CD8-positive, alpha-beta memory T cell (primary cell): ENCODE measurements at regions of chr5 and their contacts with region 1.

Region 1: GRCh38 chr5:157253547-157253946 is 12.4 kb upstream of the CYFIP2 start:
- DNase-seq: no peak
- H3K4me3 ChIP-seq: peak overlapping the region; percentile 8
- H3K4me3 Mint-ChIP-seq: peak overlapping the region in 6 of 7 donors; percentile 63 to 82 (median 74)
- H3K27ac ChIP-seq: peak overlapping the region; percentile 48
- H3K27ac Mint-ChIP-seq: peak overlapping the region; percentile 84 to 99 (median 92)
- H3K4me1 ChIP-seq: peaks cover 98% of the 10 kb centered on the region
- H3K4me1 Mint-ChIP-seq: peaks cover 93 to 99% (median 96%) of the 10 kb centered on the region in 3 donors
- H3K27me3 ChIP-seq: no peaks in the 10 kb centered on the region
- H3K27me3 Mint-ChIP-seq: peaks cover 0 to 5% of the 10 kb centered on the region in 2 donors

Region 2: DNA sequence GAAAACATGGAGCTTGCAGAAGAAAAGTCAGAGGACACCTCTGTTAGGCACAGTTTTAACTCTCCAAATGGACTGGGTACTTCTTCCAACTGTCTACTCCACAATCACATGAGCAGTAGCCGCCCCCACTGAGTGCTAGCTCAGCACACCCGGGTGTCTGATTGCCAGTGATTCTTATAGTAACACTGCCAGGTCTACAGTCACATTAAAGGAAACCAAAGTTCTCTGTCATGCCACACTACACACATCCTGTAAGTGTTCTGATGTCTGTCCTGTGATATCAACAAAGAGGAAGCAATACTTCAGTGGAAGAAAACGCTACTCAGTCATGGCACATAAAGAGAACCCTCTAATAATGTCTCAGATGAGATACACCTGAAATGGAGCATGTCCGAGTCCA is 144.6 kb before region 1 on chr5 and contains the start of gene HAVCR2:
- CTCF ChIA-PET with region 1: no interaction called
- POLR2A ChIA-PET with region 1: no interaction called
- DNase-seq: peak; percentile 6 to 58 (median 53)
- H3K4me3 ChIP-seq: peak within 1 kb of the TSS; percentile 62
- H3K4me3 Mint-ChIP-seq: peak within 1 kb of the TSS; percentile 53 to 83 (median 80)
- H3K27ac ChIP-seq: peak within 1 kb of the TSS; percentile 34
- H3K27ac Mint-ChIP-seq: peak within 1 kb of the TSS; percentile 59 to 96 (median 92)
- H3K4me1 ChIP-seq: peaks cover 23% of the 10 kb centered on the region
- H3K4me1 Mint-ChIP-seq: peaks cover 29 to 40% (median 36%) of the 10 kb centered on the region in 3 donors
- H3K27me3 ChIP-seq: no peaks in the 10 kb centered on the region
- H3K27me3 Mint-ChIP-seq: no peaks in the 10 kb centered on the region
- total RNA-seq, gene HAVCR2: 6.3 to 6.6 TPM

Region 3: GRCh38 chr5:157204765-157205164 is 48.8 kb before region 1 on chr5:
- CTCF ChIA-PET with region 1: interaction called, 10 read pairs
- POLR2A ChIA-PET with region 1: no interaction called
- DNase-seq: peak in 1 of 5 donors; percentile 76
- H3K4me3 ChIP-seq: peak overlapping the region; percentile 2
- H3K4me3 Mint-ChIP-seq: peak overlapping the region; percentile 48 to 72 (median 69)
- H3K27ac ChIP-seq: peak overlapping the region; percentile 45
- H3K27ac Mint-ChIP-seq: peak overlapping the region; percentile 78 to 96 (median 87)
- H3K4me1 ChIP-seq: peaks cover 95% of the 10 kb centered on the region
- H3K4me1 Mint-ChIP-seq: peaks cover 71 to 95% (median 94%) of the 10 kb centered on the region in 3 donors
- H3K27me3 ChIP-seq: no peaks in the 10 kb centered on the region
- H3K27me3 Mint-ChIP-seq: peaks cover 0 to 3% of the 10 kb centered on the region in 2 donors

Region 4: GRCh38 chr5:157241483-157241882 is 12.1 kb before region 1 on chr5:
- CTCF ChIA-PET with region 1: interaction called, 10 read pairs
- POLR2A ChIA-PET with region 1: no interaction called
- DNase-seq: no peak
- H3K4me3 ChIP-seq: no peak overlapping the region
- H3K4me3 Mint-ChIP-seq: no peak overlapping the region
- H3K27ac ChIP-seq: no peak overlapping the region
- H3K27ac Mint-ChIP-seq: peak overlapping the region in 3 of 8 donors; percentile 3 to 73 (median 17)
- H3K4me1 ChIP-seq: peaks cover 26% of the 10 kb centered on the region
- H3K4me1 Mint-ChIP-seq: peaks cover 23 to 70% (median 51%) of the 10 kb centered on the region in 3 donors
- H3K27me3 ChIP-seq: no peaks in the 10 kb centered on the region
- H3K27me3 Mint-ChIP-seq: no peaks in the 10 kb centered on the region

Region 5: DNA sequence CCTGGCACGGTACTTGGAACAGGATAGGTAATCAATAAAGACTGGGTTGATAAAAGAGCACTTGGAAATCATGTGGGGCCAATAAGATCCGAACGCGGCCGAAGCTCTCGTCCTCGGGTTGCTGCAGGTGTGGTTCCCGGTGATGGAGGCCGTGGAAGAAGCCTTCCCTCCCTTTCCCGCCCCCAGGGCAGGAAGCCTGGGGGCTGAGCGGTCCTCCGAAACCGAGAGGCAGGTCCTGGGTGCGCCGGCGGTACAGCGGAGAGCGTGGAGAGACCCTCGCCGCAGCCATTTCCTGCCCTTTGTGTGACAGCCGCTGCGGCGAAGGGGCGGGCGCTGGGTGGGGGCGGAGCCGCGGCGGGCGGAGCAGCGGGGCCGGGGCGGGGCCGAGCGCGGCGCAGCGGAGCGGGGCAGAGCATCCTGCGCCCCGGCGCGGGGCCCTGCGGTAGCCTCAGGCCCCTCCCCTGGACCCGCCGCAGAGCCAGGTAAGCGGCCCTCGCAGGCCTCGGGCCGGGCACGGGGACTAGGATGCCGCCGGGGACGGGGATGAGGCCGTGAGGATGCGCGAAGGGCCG is 12.3 kb after region 1 on chr5 and contains the start of gene CYFIP2:
- CTCF ChIA-PET with region 1: interaction called, 62 read pairs
- POLR2A ChIA-PET with region 1: interaction called, 28 read pairs
- DNase-seq: peak; percentile 82 to 92 (median 86)
- H3K4me3 ChIP-seq: peak within 1 kb of the TSS; percentile 75
- H3K4me3 Mint-ChIP-seq: peak within 1 kb of the TSS; percentile 97 to 99 (median 97)
- H3K27ac ChIP-seq: peak within 1 kb of the TSS; percentile 68
- H3K27ac Mint-ChIP-seq: peak within 1 kb of the TSS; percentile 92 to 99 (median 98)
- H3K4me1 ChIP-seq: peaks cover 66% of the 10 kb centered on the region
- H3K4me1 Mint-ChIP-seq: peaks cover 67 to 80% (median 79%) of the 10 kb centered on the region in 3 donors
- H3K27me3 ChIP-seq: no peaks in the 10 kb centered on the region
- H3K27me3 Mint-ChIP-seq: peaks cover 0 to 2% of the 10 kb centered on the region in 2 donors
- total RNA-seq, gene CYFIP2: 239 to 259 TPM

Region 6: DNA sequence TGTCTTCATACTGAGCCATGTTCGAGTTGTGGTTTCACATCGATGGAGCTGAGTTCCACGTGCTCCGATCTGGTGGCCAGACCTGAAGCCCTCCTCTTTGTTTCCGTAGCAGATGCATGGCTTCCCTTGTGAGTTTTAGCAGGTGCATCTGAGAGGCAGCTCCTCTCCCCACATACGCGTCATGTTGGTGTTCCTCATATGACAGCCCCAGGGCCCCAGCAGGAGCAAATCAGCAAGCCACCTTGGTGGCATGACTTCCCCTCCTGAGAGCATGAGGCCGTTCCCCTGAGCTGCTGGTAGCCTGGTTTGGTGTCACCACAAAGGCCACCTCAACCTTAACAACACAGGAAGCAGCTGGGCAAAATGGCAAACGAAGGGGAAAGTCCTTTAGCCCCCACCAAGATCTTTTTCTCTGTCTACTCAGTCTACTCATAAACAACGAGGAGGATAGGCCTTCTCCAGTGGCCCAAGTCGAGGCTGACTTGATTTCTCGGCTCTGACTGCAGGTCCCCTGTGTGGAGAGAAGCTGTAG is 18.3 kb after region 1 on chr5:
- CTCF ChIA-PET with region 1: interaction called, 62 read pairs
- POLR2A ChIA-PET with region 1: interaction called, 28 read pairs
- DNase-seq: peak; percentile 71 to 95 (median 94)
- H3K4me3 ChIP-seq: peak overlapping the region; percentile 33
- H3K4me3 Mint-ChIP-seq: peak overlapping the region; percentile 74 to 89 (median 79)
- H3K27ac ChIP-seq: peak overlapping the region; percentile 57
- H3K27ac Mint-ChIP-seq: peak overlapping the region; percentile 96 to 99 (median 98)
- H3K4me1 ChIP-seq: peaks cover 94% of the 10 kb centered on the region
- H3K4me1 Mint-ChIP-seq: peaks cover 92 to 98% (median 95%) of the 10 kb centered on the region in 3 donors
- H3K27me3 ChIP-seq: no peaks in the 10 kb centered on the region
- H3K27me3 Mint-ChIP-seq: no peaks in the 10 kb centered on the region

Region 7: DNA sequence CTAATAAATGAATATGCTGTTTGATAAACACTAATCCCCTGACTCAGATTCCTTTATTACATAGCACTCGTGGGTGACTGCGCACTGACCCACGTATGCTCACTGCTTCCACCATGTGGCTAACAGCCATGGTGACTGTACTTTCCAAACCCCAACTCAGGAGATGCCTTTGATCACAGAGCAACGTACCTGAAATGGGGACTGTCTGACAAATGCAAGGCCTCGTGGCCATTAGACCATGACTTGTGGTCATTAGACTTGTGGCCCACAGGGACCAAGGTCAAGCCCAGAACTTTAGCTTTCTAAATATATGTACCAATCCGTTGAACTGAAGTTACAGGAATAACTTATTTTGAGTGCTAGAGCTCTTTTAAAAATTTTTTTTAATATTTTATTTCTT is 58.9 kb after region 1 on chr5:
- CTCF ChIA-PET with region 1: interaction called, 15 read pairs
- POLR2A ChIA-PET with region 1: no interaction called
- DNase-seq: peak; percentile 24 to 73 (median 50)
- H3K4me3 ChIP-seq: no peak overlapping the region
- H3K4me3 Mint-ChIP-seq: no peak overlapping the region
- H3K27ac ChIP-seq: no peak overlapping the region
- H3K27ac Mint-ChIP-seq: peak overlapping the region; percentile 17 to 87 (median 82)
- H3K4me1 ChIP-seq: peaks cover 40% of the 10 kb centered on the region
- H3K4me1 Mint-ChIP-seq: peaks cover 29 to 46% (median 41%) of the 10 kb centered on the region in 3 donors
- H3K27me3 ChIP-seq: no peaks in the 10 kb centered on the region
- H3K27me3 Mint-ChIP-seq: no peaks in the 10 kb centered on the region

Region 8: GRCh38 chr5:157328277-157328912 is 74.8 kb after region 1 on chr5:
- CTCF ChIA-PET with region 1: interaction called, 17 read pairs
- POLR2A ChIA-PET with region 1: interaction called, 5 read pairs
- DNase-seq: peak; percentile 31 to 68 (median 59)
- H3K4me3 ChIP-seq: peak overlapping the region; percentile 7
- H3K4me3 Mint-ChIP-seq: peak overlapping the region in 2 of 7 donors; percentile 11 to 35
- H3K27ac ChIP-seq: no peak overlapping the region
- H3K27ac Mint-ChIP-seq: peak overlapping the region; percentile 2 to 91 (median 79)
- H3K4me1 ChIP-seq: peaks cover 30% of the 10 kb centered on the region
- H3K4me1 Mint-ChIP-seq: peaks cover 12 to 31% (median 27%) of the 10 kb centered on the region in 3 donors
- H3K27me3 ChIP-seq: no peaks in the 10 kb centered on the region
- H3K27me3 Mint-ChIP-seq: no peaks in the 10 kb centered on the region

Region 9: DNA sequence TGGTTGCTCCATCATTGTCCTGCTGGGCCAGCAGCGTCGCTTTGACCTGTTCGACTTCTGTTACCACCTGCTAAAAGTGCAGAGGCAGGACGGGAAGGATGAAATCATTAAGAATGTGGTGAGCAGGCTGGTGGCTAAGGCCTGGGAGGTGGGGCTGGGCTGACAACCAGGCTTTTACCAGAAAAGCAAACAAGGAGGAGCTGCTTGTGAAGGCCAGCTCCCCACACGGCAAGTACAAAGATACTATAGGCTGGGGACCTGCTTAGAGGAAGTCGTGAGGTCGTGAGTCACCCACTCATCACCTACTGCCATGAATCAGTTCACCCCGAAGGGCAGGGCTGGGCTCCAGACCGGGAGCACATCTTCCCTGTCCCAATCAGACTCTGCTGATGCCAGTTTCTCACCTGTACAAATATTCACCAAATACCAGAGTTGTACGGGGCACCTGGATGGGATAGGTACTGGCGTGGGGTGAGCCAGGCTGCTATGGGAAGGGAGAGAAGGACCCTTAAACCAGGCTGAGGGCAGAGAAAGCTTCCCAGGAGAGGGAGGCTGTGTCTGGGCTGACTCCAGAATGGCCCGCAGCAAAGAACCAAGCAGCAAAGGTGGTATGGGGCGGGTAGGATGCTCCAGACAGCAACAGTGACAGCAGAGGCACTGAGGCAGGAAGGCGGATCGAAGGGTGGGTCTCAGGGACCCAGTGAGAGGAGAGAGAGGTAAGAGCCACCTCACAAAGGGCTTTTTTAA is 137.2 kb after region 1 on chr5:
- CTCF ChIA-PET with region 1: no interaction called
- POLR2A ChIA-PET with region 1: no interaction called
- DNase-seq: peak in 4 of 5 donors; percentile 39 to 76 (median 56)
- H3K4me3 ChIP-seq: no peak overlapping the region
- H3K4me3 Mint-ChIP-seq: peak overlapping the region in 6 of 7 donors; percentile 13 to 69 (median 53)
- H3K27ac ChIP-seq: peak overlapping the region; percentile 43
- H3K27ac Mint-ChIP-seq: peak overlapping the region; percentile 91 to 99 (median 96)
- H3K4me1 ChIP-seq: no peaks in the 10 kb centered on the region
- H3K4me1 Mint-ChIP-seq: peaks cover 21 to 35% (median 32%) of the 10 kb centered on the region in 3 donors
- H3K27me3 ChIP-seq: no peaks in the 10 kb centered on the region
- H3K27me3 Mint-ChIP-seq: peaks cover 0 to 2% of the 10 kb centered on the region in 2 donors

Region 10: GRCh38 chr5:157449011-157449723 is 195.6 kb after region 1 on chr5:
- CTCF ChIA-PET with region 1: no interaction called
- POLR2A ChIA-PET with region 1: no interaction called
- DNase-seq: no peak
- H3K4me3 ChIP-seq: no peak overlapping the region
- H3K4me3 Mint-ChIP-seq: no peak overlapping the region
- H3K27ac ChIP-seq: no peak overlapping the region
- H3K27ac Mint-ChIP-seq: no peak overlapping the region
- H3K4me1 ChIP-seq: no peaks in the 10 kb centered on the region
- H3K4me1 Mint-ChIP-seq: no peaks in the 10 kb centered on the region
- H3K27me3 ChIP-seq: no peaks in the 10 kb centered on the region
- H3K27me3 Mint-ChIP-seq: peaks cover 0 to 1% of the 10 kb centered on the region in 2 donors